ENCODE measurements at regions of chr9 and their contacts with region 1.

Region 1: DNA sequence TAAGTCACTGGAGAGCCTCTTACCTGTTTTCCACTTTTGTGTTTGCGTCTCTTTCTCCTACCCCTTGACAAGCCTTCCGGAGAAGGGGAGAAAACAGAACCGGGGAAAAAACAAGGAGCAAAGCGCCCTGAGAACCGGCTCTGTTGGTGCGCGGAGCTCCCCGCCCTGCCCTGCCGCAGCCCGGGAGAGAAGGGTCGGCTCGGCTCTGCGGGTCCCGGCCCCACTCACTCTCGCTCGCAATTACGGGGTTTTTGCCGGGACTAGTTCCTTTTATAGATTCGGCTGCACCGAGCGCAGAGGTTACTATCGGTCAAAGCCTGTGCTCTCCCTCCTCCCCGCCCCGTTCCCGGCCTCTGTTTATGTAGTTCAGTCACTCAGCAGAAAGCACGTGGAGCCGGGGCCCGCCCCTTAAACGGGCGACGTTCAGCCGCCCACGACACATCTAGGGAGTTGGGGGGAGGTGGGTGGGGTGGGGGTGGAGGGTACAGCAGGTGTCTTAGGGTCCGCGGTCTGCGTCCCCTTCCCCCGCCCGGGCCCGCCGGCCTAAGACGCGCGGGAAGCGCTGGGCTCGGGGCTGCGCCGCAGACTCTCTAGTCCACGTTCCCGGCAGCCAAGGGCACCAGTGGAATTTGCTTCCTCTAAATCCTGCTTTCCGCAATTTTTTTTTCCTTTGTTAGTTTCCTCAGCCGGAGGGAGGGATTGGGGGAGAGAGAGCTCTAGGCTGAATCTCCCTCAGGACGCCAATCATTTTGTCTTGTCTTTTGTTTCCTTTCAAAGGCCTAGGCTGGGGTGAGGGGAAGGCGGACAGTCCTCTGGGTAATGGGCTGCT is at the start of gene ABCA1:
- DNase-seq: peak; percentile 86 to 93 (median 91)
- H3K4me3 ChIP-seq: peak within 1 kb of the TSS; percentile 71
- H3K27ac ChIP-seq: peak within 1 kb of the TSS; percentile 13 to 71
- H3K4me1 ChIP-seq: no peaks in the 10 kb centered on the region
- H3K27me3 ChIP-seq: no peaks in the 10 kb centered on the region
- CTCF ChIP-seq: no peak
- EP300 ChIP-seq: no peak
- POLR2A ChIP-seq: peak; percentile 27
- total RNA-seq, gene ABCA1: 7.9 to 24.5 (median 19.4) TPM

Region 2: GRCh38 chr9:104868687-104869404 is 59.3 kb before region 1 on chr9:
- intact Hi-C with region 1: loop called (anchors 2 to 10 kb)
- DNase-seq: peak; percentile 77 to 84 (median 81)
- H3K4me3 ChIP-seq: no peak overlapping the region
- H3K27ac ChIP-seq: peak overlapping the region; percentile 15 to 73
- H3K4me1 ChIP-seq: peaks cover 35% of the 10 kb centered on the region
- H3K27me3 ChIP-seq: no peaks in the 10 kb centered on the region
- CTCF ChIP-seq: no peak
- EP300 ChIP-seq: no peak
- POLR2A ChIP-seq: no peak

Region 3: DNA sequence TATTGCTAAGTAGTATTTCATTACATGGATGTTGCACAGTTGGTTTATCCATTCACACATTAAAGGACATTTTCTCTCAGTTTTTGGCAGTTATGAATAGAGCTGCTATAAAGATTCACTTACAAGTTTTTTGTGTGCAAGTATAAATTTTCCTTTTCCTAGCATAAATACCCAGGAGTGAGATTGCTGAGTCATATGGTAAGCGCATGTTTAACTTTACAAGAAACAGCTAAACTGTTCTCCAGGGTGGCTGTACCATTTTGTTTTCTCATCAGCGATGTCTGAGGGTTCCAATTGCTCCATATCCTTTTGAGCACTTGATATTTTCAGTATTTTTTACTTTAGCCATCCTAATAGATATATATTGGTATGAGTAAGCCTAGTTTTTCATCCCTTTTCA is 16.2 kb after region 1 on chr9:
- intact Hi-C with region 1: no loop called
- DNase-seq: no peak
- H3K4me3 ChIP-seq: no peak overlapping the region
- H3K27ac ChIP-seq: no peak overlapping the region
- H3K4me1 ChIP-seq: no peaks in the 10 kb centered on the region
- H3K27me3 ChIP-seq: no peaks in the 10 kb centered on the region
- CTCF ChIP-seq: no peak
- EP300 ChIP-seq: no peak
- POLR2A ChIP-seq: no peak

Region 4: DNA sequence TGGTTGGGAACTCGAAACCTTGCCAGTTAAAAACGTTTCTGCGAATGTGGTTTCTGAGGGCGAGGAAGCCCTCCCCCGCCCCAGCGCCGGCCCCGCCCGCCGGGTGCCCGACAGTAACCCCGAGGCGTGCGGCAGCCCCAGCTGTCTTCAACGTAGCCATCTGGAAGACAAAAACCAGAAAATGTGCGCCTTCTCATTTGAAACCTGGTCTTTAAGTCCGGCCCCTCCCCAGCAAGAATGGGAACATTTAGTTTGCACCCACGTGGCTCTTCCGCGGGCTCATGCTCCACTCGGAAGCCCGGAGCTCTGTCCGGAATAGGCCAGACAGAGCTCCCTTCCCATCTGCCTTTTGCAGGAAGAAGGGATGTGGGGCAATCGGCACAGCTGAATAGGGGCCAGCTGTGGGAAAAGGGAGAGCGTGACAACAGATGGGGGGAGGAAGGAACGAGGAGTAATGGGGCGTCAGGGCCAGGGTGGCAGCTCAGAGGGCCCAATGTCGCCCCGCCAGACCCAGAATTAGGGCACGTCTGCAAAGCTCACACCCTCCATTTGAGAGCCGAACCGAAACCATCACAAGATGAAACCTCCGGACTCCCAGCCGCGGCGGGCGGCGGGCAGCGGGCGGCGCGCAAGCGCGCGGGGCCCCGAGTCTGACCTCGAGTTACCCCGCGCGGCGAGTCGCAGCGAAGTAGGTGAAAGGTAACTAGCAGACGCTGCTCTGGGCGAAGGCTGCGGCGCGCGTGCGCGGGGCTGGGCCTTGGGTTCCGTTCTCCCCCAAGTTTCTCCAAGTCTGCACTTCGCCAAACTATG is 63.2 kb after region 1 on chr9:
- intact Hi-C with region 1: loop called in 2 of 4 experiments (anchors 5 to 10 kb)
- DNase-seq: peak; percentile 86 to 91 (median 91)
- H3K4me3 ChIP-seq: peak overlapping the region; percentile 60
- H3K27ac ChIP-seq: peak overlapping the region; percentile 53 to 89
- H3K4me1 ChIP-seq: peaks cover 7% of the 10 kb centered on the region
- H3K27me3 ChIP-seq: no peaks in the 10 kb centered on the region
- CTCF ChIP-seq: no peak
- EP300 ChIP-seq: no peak
- POLR2A ChIP-seq: peak; percentile 31

Region 5: DNA sequence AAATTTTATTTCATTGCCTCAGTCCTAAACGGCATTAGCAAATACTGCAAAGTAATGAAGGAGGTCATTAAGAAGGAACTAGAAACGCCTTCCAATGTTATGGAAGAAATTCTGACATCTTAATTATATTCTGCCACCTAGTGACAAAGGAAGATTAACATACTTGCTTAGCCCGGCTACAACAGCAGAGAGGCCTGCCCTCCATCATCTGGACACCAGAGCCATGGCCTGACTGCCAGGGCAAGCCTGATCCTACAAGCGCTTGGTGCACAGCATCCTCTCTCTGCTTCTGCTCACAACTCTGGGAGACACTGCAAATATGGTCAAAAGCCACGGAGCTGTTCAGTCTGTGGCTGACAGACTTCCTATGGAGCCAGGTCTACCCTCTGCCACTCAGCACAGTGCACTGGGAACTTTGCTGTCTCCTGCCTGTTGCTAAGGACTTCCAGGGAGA is 229.0 kb after region 1 on chr9:
- intact Hi-C with region 1: loop called in 2 of 4 experiments (anchors 10 kb)
- DNase-seq: peak; percentile 46 to 53 (median 50)
- H3K4me3 ChIP-seq: no peak overlapping the region
- H3K27ac ChIP-seq: no peak overlapping the region
- H3K4me1 ChIP-seq: no peaks in the 10 kb centered on the region
- H3K27me3 ChIP-seq: no peaks in the 10 kb centered on the region
- CTCF ChIP-seq: peak in 2 of 3 donors; percentile 53 to 58
- EP300 ChIP-seq: no peak
- POLR2A ChIP-seq: no peak

Measured in ovary (tissue), 10 donors.